CD4-positive, alpha-beta memory T cell (primary cell): ENCODE measurements at regions of chr3 and their contacts with region 1.

Region 1: GRCh38 chr3:56801662-56802377 is at the start of gene ARHGEF3:
- DNase-seq: peak; percentile 86 to 90 (median 86)
- H3K4me3 ChIP-seq: peak within 1 kb of the TSS; percentile 86 to 87
- H3K4me3 Mint-ChIP-seq: peak within 1 kb of the TSS; percentile 92 to 99 (median 96)
- H3K27ac ChIP-seq: peak within 1 kb of the TSS; percentile 79
- H3K27ac Mint-ChIP-seq: peak within 1 kb of the TSS; percentile 85 to 98 (median 92)
- H3K4me1 ChIP-seq: peaks cover 38% of the 10 kb centered on the region
- H3K4me1 Mint-ChIP-seq: peaks cover 33 to 64% (median 43%) of the 10 kb centered on the region in 4 donors
- H3K27me3 ChIP-seq: no peaks in the 10 kb centered on the region
- H3K27me3 Mint-ChIP-seq: no peaks in the 10 kb centered on the region
- total RNA-seq, gene ARHGEF3: 120 TPM

Region 2: DNA sequence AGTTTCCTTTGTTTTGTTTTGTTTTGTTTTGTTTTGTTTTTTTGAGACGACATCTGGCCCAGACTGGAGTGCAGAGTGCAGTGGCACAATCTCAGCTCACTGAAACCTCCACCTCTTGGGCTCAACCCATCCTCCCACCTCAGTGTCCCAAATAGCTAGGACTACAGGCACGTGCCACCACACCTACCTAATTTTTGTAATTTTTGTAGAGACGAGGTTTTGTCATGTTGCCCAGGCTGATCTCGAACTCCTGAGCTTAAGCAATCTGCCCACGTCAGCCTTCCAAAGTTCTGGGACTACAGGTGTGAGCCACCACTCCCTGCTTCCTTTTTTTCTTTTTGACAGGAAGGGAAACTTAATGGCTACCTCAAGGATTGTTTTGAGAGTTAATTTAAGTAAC is 235.7 kb before region 1 on chr3:
- CTCF ChIA-PET with region 1: no interaction called
- POLR2A ChIA-PET with region 1: no interaction called
- intact Hi-C with region 1: no loop called
- DNase-seq: no peak
- H3K4me3 ChIP-seq: no peak overlapping the region
- H3K4me3 Mint-ChIP-seq: no peak overlapping the region
- H3K27ac ChIP-seq: no peak overlapping the region
- H3K27ac Mint-ChIP-seq: no peak overlapping the region
- H3K4me1 ChIP-seq: no peaks in the 10 kb centered on the region
- H3K4me1 Mint-ChIP-seq: peaks cover 5 to 16% (median 14%) of the 10 kb centered on the region in 4 donors
- H3K27me3 ChIP-seq: no peaks in the 10 kb centered on the region
- H3K27me3 Mint-ChIP-seq: no peaks in the 10 kb centered on the region

Region 3: GRCh38 chr3:56702490-56703315 is 99.1 kb before region 1 on chr3:
- CTCF ChIA-PET with region 1: interaction called, 213 read pairs
- POLR2A ChIA-PET with region 1: interaction called, 84 read pairs
- intact Hi-C with region 1: loop called (anchors 1 kb)
- DNase-seq: peak; percentile 57 to 70 (median 66)
- H3K4me3 ChIP-seq: no peak overlapping the region
- H3K4me3 Mint-ChIP-seq: no peak overlapping the region
- H3K27ac ChIP-seq: no peak overlapping the region
- H3K27ac Mint-ChIP-seq: peak overlapping the region in 3 of 7 donors; percentile 15 to 42 (median 32)
- H3K4me1 ChIP-seq: peaks cover 16% of the 10 kb centered on the region
- H3K4me1 Mint-ChIP-seq: peaks cover 11 to 21% (median 13%) of the 10 kb centered on the region in 4 donors
- H3K27me3 ChIP-seq: no peaks in the 10 kb centered on the region
- H3K27me3 Mint-ChIP-seq: no peaks in the 10 kb centered on the region

Region 4: GRCh38 chr3:56758539-56758981 is 43.3 kb before region 1 on chr3:
- CTCF ChIA-PET with region 1: interaction called, 267 read pairs
- POLR2A ChIA-PET with region 1: interaction called, 172 read pairs
- intact Hi-C with region 1: loop called (anchors 1 kb)
- DNase-seq: peak; percentile 14 to 69 (median 21)
- H3K4me3 ChIP-seq: no peak overlapping the region
- H3K4me3 Mint-ChIP-seq: peak overlapping the region; percentile 34 to 78 (median 56)
- H3K27ac ChIP-seq: peak overlapping the region; percentile 10
- H3K27ac Mint-ChIP-seq: peak overlapping the region; percentile 48 to 94 (median 86)
- H3K4me1 ChIP-seq: peaks cover 89% of the 10 kb centered on the region
- H3K4me1 Mint-ChIP-seq: peaks cover 68 to 90% (median 78%) of the 10 kb centered on the region in 4 donors
- H3K27me3 ChIP-seq: no peaks in the 10 kb centered on the region
- H3K27me3 Mint-ChIP-seq: no peaks in the 10 kb centered on the region

Region 5: GRCh38 chr3:56812754-56813650 is 11.2 kb after region 1 on chr3:
- CTCF ChIA-PET with region 1: interaction called, 77 read pairs
- POLR2A ChIA-PET with region 1: interaction called, 77 read pairs
- intact Hi-C with region 1: loop called (anchors 1 kb)
- DNase-seq: no peak
- H3K4me3 ChIP-seq: peak overlapping the region in 1 of 2 donors; percentile 27
- H3K4me3 Mint-ChIP-seq: peak overlapping the region; percentile 39 to 88 (median 73)
- H3K27ac ChIP-seq: peak overlapping the region; percentile 28
- H3K27ac Mint-ChIP-seq: peak overlapping the region; percentile 81 to 96 (median 88)
- H3K4me1 ChIP-seq: peaks cover 81% of the 10 kb centered on the region
- H3K4me1 Mint-ChIP-seq: peaks cover 67 to 85% (median 76%) of the 10 kb centered on the region in 4 donors
- H3K27me3 ChIP-seq: no peaks in the 10 kb centered on the region
- H3K27me3 Mint-ChIP-seq: no peaks in the 10 kb centered on the region

Region 6: DNA sequence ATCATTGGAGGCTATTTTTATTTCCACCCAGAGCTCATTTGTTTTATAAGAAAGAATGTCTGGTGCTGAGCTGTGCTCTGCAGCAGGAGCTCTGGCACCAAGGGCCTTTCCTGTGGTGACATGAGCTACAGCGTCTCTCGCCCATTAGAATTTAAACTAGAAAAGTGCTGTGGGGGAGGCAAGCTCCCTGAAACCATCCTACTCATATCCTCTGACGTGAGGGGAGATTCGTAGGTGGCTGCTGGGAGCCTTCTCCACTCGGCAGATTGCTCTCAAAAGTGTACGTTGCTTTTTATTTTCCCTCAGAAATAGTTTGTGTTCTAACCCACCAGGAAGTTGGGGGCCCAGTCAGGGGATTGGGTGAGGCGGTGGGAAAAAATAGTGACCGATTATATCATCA is 76.3 kb after region 1 on chr3:
- CTCF ChIA-PET with region 1: interaction called, 10 read pairs
- POLR2A ChIA-PET with region 1: interaction called, 4 read pairs
- intact Hi-C with region 1: no loop called
- DNase-seq: peak in 4 of 5 donors; percentile 38 to 63 (median 41)
- H3K4me3 ChIP-seq: peak overlapping the region in 1 of 2 donors; percentile 19
- H3K4me3 Mint-ChIP-seq: peak overlapping the region; percentile 21 to 86 (median 74)
- H3K27ac ChIP-seq: peak overlapping the region; percentile 48
- H3K27ac Mint-ChIP-seq: peak overlapping the region; percentile 74 to 93 (median 89)
- H3K4me1 ChIP-seq: peaks cover 53% of the 10 kb centered on the region
- H3K4me1 Mint-ChIP-seq: peaks cover 55 to 86% (median 72%) of the 10 kb centered on the region in 4 donors
- H3K27me3 ChIP-seq: no peaks in the 10 kb centered on the region
- H3K27me3 Mint-ChIP-seq: no peaks in the 10 kb centered on the region

Region 7: GRCh38 chr3:56974247-56974930 is 172.6 kb after region 1 on chr3:
- CTCF ChIA-PET with region 1: interaction called, 15 read pairs
- POLR2A ChIA-PET with region 1: interaction called, 4 read pairs
- intact Hi-C with region 1: no loop called
- DNase-seq: no peak
- H3K4me3 ChIP-seq: no peak overlapping the region
- H3K4me3 Mint-ChIP-seq: no peak overlapping the region
- H3K27ac ChIP-seq: no peak overlapping the region
- H3K27ac Mint-ChIP-seq: no peak overlapping the region
- H3K4me1 ChIP-seq: no peaks in the 10 kb centered on the region
- H3K4me1 Mint-ChIP-seq: no peaks in the 10 kb centered on the region
- H3K27me3 ChIP-seq: no peaks in the 10 kb centered on the region
- H3K27me3 Mint-ChIP-seq: no peaks in the 10 kb centered on the region

Region 8: DNA sequence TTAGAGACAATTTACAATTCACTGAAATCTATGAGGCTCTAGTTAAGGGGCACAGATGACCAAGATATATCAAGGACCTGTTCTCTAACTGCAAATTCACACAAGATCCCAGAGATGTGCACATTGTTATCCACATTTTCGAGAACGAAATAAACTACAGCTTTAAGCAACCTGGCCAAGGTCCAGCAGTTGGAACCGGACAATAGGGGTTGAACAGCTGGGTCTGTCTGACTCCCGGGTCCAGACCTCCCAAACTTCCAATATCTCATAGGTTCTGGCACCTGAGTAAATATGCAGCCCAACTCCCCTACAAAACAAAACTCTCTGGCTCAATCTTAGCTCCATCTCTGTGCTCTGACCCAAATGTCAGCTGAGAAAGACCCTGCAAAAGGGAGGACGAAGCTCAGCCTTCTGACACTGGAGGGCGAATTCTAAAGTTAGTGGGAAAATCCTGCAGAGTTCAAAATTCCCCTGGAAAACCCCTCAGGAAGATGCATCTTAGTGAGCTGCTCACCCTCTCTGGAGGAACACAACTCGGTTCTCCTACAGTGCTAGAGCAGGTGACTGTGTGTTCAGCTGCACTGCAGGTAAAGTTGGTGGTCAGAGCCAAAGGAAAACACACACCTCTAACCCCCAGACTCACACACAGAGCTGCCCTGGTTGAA is 244.4 kb after region 1 on chr3:
- CTCF ChIA-PET with region 1: no interaction called
- POLR2A ChIA-PET with region 1: no interaction called
- intact Hi-C with region 1: no loop called
- DNase-seq: no peak
- H3K4me3 ChIP-seq: no peak overlapping the region
- H3K4me3 Mint-ChIP-seq: no peak overlapping the region
- H3K27ac ChIP-seq: no peak overlapping the region
- H3K27ac Mint-ChIP-seq: peak overlapping the region in 1 of 7 donors; percentile 6
- H3K4me1 ChIP-seq: no peaks in the 10 kb centered on the region
- H3K4me1 Mint-ChIP-seq: no peaks in the 10 kb centered on the region
- H3K27me3 ChIP-seq: no peaks in the 10 kb centered on the region
- H3K27me3 Mint-ChIP-seq: peaks cover 5 to 18% of the 10 kb centered on the region in 2 donors

Region 9: DNA sequence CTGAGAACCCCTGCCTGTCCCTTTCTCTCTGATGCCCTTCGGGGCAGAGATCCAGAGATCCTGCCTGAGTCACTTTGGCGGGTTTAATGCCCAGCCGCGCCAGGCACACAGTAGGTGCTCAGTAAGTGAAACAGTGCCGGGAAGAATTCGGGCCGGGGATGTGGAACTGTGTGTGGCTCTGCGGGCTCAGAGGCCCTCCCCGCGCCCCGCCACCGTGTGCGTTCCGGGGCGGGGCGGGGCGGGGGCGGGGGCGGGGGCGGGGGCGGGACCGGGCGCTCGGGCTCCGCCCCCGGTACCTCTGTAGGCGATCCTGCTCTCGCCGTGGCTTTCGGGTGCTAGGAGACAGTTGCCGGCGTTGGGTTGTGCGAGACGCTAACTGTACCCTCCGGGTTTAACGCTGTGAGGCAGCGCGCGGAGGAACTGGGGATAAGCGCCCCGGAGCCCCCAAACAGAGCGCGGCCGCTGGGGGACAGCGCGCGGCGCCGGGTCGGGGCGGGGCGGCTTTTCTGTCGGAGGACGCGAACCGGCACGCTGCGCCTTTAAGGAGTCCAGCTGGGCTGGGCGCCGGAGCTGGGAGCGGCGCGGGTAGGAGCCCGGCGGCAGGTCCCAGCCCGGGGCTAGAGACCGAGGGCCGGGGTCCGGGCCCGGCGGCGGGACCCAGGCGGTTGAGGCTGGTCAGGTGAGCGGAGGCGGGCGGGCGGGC is 1435.6 kb after region 1 on chr3 and contains the start of gene ABHD6:
- CTCF ChIA-PET with region 1: no interaction called
- POLR2A ChIA-PET with region 1: no interaction called
- intact Hi-C with region 1: loop called (anchors 5 kb)
- DNase-seq: peak; percentile 72 to 93 (median 88)
- H3K4me3 ChIP-seq: peak within 1 kb of the TSS; percentile 58
- H3K4me3 Mint-ChIP-seq: peak within 1 kb of the TSS; percentile 88 to 96 (median 92)
- H3K27ac ChIP-seq: peak within 1 kb of the TSS; percentile 62
- H3K27ac Mint-ChIP-seq: peak within 1 kb of the TSS; percentile 85 to 92 (median 91)
- H3K4me1 ChIP-seq: peaks cover 12% of the 10 kb centered on the region
- H3K4me1 Mint-ChIP-seq: peaks cover 7 to 21% (median 12%) of the 10 kb centered on the region in 4 donors
- H3K27me3 ChIP-seq: no peaks in the 10 kb centered on the region
- H3K27me3 Mint-ChIP-seq: peaks cover 3 to 4% of the 10 kb centered on the region in 2 donors
- total RNA-seq, gene ABHD6: 5.1 to 7.2 TPM